H1 (cell line): ENCODE measurements at regions of chr1 and their contacts with region 1.

Region 1: DNA sequence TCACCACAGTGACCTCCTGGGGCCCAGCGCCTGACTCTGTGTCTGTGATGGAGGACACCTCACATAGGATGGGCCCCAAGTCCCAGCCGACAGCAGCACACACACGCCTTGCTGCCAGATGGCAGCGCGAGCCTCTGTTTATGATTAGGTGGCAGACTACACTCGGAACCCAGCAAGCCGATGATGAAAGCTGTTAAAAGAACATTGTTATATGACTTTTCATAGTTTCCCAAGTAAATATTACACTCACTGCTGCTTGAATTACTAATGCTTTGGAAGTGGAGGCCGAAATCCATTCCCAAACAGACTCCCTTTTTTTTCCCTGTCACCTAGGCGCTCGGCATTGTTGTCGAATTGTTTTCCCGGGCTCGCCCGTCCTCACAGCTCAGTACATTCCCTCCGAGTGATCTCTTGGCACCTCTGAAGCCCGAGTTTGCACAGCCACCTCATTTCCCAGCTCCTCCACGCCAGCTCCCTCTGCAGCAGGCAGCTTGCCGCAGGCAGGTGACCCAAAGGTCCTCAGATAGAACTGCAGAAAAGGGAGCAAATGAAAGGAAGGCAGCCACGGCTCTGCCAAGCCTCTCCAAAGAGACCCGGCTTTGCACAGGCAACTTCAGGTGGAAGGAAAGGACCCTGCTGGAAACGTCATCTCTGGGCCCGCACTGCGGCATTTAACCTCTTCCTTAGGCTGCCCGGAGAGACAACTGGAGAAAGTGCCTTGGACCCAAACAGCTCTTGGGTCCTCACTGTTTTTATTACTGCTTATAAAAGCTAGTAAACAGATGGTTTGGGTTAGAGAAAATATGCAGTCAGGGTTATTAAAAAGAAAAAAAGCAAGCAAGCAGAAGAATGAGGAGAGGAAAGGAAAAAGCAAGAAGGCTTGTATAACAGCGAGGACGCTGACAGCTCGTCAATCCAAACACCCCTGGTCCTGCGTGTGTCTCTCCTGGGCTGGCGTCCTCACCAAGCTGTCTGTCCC is 72.2 kb upstream of the SLC25A33 start:
- DNase-seq: no peak
- H3K4me3 ChIP-seq: no peak overlapping the region
- H3K27ac ChIP-seq: no peak overlapping the region
- H3K4me1 ChIP-seq: no peaks in the 10 kb centered on the region
- H3K27me3 ChIP-seq: no peaks in the 10 kb centered on the region
- CTCF ChIP-seq: no peak
- EP300 ChIP-seq: no peak
- POLR2A ChIP-seq: no peak
- RAD21 ChIP-seq: no peak

Region 2: GRCh38 chr1:9481048-9481447 is 14.0 kb after region 1 on chr1:
- CTCF ChIA-PET with region 1: interaction called, 12 read pairs
- POLR2A ChIA-PET with region 1: interaction called, 3 read pairs
- DNase-seq: no peak
- H3K4me3 ChIP-seq: no peak overlapping the region
- H3K27ac ChIP-seq: no peak overlapping the region
- H3K4me1 ChIP-seq: no peaks in the 10 kb centered on the region
- H3K27me3 ChIP-seq: no peaks in the 10 kb centered on the region
- CTCF ChIP-seq: no peak
- EP300 ChIP-seq: no peak
- POLR2A ChIP-seq: no peak
- RAD21 ChIP-seq: no peak